ENCODE measurements at regions of chr5 and their contacts with region 1.

Region 1: DNA sequence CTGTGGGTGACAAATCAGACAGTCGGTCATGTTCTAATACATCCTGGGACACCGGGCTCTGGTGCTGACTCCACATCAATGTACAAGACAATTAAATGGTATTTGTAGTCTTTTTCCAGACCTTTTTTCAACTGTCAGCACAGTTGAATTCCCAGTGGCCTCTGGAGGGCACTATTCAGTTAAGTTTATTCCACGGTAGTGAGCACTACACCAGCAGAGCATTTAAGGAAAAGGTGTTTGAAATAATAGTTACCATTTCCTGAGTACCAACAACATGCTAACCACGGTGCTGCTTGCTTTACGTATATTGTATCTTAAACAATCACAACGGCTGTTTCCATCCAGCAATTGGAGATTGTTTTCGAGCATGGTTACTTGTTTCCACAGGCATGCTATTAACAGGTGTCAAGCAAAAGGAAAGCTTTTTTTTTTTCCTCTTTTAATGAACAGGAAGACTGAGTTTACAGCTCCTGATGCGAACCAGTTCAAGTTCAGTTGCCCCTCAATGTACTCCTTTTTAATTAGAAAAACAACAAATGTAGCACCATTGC is 186.7 kb downstream of the PDZD2 start:
- DNase-seq: peak in 1 of 3 donors; percentile 71
- ATAC-seq: peak; percentile 51
- H3K4me3 ChIP-seq: no peak overlapping the region
- H3K4me1 ChIP-seq: no peaks in the 10 kb centered on the region
- CTCF ChIP-seq: peak; percentile 28

Region 2: DNA sequence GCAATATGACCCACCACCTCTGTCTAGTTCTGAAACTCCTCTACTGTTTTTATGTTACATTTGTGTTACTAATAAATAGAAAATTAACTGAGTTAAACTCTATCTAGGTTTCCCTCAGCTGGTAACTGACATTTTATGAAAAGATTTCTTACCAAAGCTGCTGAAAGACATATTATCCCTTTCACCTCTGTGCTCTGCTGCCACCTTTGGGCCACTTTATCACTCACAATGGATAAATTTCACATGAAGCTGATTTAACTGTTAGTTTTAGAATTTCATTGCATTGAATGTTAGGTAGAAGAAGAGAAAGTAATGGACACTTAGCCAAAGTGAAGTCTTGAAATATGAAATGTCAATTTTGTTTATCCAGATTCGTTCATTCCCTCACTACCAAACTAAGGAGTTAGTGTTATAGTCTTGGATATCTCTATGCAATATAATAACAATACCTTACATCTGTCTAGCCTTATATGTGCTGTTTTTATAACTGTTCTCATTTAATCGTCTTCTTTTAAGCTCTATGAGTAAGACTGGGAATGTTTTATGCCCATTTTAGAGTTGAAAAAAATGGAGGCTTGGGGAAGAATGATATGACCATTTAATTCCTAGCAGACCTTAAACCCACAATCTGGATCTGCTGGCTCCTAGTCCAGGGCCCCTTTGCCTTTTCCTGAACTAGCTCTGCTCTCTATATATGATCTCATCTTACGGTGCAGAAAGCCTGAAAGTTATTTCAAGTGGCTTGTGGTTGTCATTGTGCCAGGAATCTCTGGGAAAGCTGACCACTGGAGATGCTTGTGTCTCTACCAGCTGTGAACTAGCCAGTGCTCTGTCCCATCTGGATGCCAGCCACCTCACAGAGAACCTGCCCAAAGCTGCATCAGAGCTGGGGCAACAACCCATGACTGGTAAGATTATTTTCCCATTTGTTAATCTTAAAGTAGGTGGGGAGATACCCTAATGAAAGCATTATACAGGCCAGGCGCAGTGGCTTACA is 251.4 kb after region 1 on chr5:
- intact Hi-C with region 1: loop called (anchors 5 kb)
- DNase-seq: peak in 1 of 3 donors; percentile 68
- ATAC-seq: no peak
- H3K4me3 ChIP-seq: no peak overlapping the region
- H3K4me1 ChIP-seq: no peaks in the 10 kb centered on the region
- CTCF ChIP-seq: no peak

Measured in mucosa of descending colon (tissue), 3 donors.